Naive thymus-derived CD4-positive, alpha-beta T cell (primary cell): ENCODE measurements at regions of chr11 and their contacts with region 1.

Region 1: GRCh38 chr11:44727373-44728287 is 868 bp downstream of the TSPAN18 start:
- DNase-seq: peak; percentile 68 to 87 (median 80)
- ATAC-seq: peak; percentile 88
- H3K4me3 ChIP-seq: peak overlapping the region; percentile 72
- H3K4me3 Mint-ChIP-seq: peak overlapping the region; percentile 73 to 95 (median 90)
- H3K27ac ChIP-seq: peak overlapping the region; percentile 71
- H3K27ac Mint-ChIP-seq: peak overlapping the region; percentile 37 to 91 (median 76)
- H3K4me1 ChIP-seq: peaks cover 10 to 31% of the 10 kb centered on the region in 2 donors
- H3K4me1 Mint-ChIP-seq: peaks cover 35 to 61% (median 56%) of the 10 kb centered on the region in 7 donors
- H3K27me3 ChIP-seq: peaks cover 0 to 3% of the 10 kb centered on the region in 2 donors
- H3K27me3 Mint-ChIP-seq: peaks cover 0 to 38% (median 0%) of the 10 kb centered on the region in 5 donors

Region 2: GRCh38 chr11:44556735-44557409 is 170.8 kb before region 1 on chr11:
- CTCF ChIA-PET with region 1: interaction called, 4 read pairs
- POLR2A ChIA-PET with region 1: no interaction called
- intact Hi-C with region 1: loop called in 1 of 2 experiments (anchors 2 kb)
- DNase-seq: peak in 8 of 9 donors; percentile 30 to 69 (median 60)
- ATAC-seq: peak; percentile 84
- H3K4me3 ChIP-seq: no peak overlapping the region
- H3K4me3 Mint-ChIP-seq: peak overlapping the region in 2 of 10 donors; percentile 20 to 25
- H3K27ac ChIP-seq: no peak overlapping the region
- H3K27ac Mint-ChIP-seq: peak overlapping the region in 4 of 9 donors; percentile 8 to 65 (median 57)
- H3K4me1 ChIP-seq: peaks cover 9 to 13% of the 10 kb centered on the region in 2 donors
- H3K4me1 Mint-ChIP-seq: peaks cover 11 to 39% (median 29%) of the 10 kb centered on the region in 7 donors
- H3K27me3 ChIP-seq: no peaks in the 10 kb centered on the region
- H3K27me3 Mint-ChIP-seq: peaks cover 0 to 3% (median 0%) of the 10 kb centered on the region in 5 donors

Region 3: DNA sequence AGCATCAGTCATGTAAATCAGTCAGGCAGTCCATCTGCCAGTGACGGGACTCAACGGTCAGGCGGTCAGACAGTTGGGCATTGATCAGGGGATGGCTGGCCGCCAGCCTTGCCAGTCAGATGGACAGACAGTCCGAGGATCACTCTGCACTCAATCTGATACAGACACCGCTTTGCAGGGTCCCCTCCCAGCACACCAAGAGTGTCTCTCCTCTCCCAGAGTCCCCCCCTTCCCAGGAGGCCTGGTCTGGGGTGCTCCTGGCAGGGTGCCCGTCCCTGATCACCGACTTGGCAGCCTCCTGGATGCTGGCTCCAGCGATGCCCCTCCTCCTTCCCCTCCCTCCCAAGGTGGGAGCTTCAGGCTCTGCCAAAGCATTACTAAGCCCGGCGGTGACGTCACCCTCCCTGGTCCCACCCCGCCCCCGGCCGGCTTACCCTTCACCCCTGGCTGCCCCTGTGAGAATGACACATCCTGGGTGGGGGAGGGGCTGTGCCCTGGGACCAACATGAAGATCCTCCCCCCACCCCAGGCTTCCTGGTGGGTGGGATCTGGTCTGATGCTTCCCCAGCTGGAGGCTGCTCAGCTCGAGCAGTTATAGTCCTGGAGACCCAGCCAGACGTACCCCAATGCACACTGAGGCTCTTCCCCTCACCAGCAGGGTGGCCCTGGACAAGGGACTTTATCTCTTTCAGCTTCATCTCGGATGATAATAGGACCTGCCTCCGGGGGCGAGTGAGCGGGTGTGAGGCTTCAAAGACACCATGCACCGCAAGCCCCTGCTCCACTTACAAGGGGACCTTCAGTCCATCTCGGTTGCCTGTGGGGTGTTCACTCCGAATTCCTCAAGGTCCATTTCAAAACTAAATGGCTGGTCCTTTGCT is 93.0 kb before region 1 on chr11:
- CTCF ChIA-PET with region 1: interaction called, 4 read pairs
- POLR2A ChIA-PET with region 1: no interaction called
- intact Hi-C with region 1: loop called in 1 of 2 experiments (anchors 5 kb)
- DNase-seq: peak in 1 of 9 donors; percentile 17
- ATAC-seq: no peak
- H3K4me3 ChIP-seq: no peak overlapping the region
- H3K4me3 Mint-ChIP-seq: no peak overlapping the region
- H3K27ac ChIP-seq: no peak overlapping the region
- H3K27ac Mint-ChIP-seq: no peak overlapping the region
- H3K4me1 ChIP-seq: no peaks in the 10 kb centered on the region
- H3K4me1 Mint-ChIP-seq: peaks cover 2 to 23% (median 11%) of the 10 kb centered on the region in 7 donors
- H3K27me3 ChIP-seq: peaks cover 0 to 3% of the 10 kb centered on the region in 2 donors
- H3K27me3 Mint-ChIP-seq: peaks cover 0 to 27% (median 0%) of the 10 kb centered on the region in 5 donors

Region 4: DNA sequence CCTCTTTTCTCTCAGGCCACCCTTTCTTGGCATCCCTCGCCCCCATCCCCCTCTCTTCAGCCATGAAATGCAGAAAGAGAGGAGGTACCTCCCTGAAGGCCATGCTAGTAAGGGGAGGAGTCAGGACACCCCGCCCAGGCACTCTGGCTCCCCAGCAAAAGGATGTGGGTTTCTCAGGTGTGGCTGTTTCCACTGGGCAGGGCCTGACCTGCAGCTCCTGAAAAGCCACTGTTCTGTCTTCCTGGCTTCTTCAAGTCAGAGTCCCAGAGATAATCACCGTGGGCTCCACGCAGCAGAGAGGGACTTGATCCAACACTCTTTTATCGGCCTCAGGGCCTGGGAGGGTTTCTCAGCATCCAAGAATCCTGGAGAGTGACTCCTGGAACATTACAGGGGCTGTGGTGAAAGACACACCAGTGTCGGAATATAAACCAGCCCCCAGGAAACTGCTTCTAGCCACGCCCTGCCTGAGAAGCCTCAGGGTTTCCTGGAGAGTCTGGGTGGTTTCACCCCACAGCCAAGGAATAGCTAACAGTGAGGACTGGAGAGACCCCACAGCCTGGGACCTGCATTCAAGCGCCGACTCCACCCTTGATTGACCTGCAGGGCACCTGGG is 46.5 kb before region 1 on chr11:
- CTCF ChIA-PET with region 1: no interaction called
- POLR2A ChIA-PET with region 1: interaction called, 4 read pairs
- intact Hi-C with region 1: loop called (anchors 1 to 2 kb)
- DNase-seq: peak in 7 of 9 donors; percentile 33 to 73 (median 65)
- ATAC-seq: peak; percentile 73
- H3K4me3 ChIP-seq: peak overlapping the region; percentile 59
- H3K4me3 Mint-ChIP-seq: peak overlapping the region; percentile 51 to 93 (median 86)
- H3K27ac ChIP-seq: peak overlapping the region; percentile 59
- H3K27ac Mint-ChIP-seq: peak overlapping the region; percentile 38 to 94 (median 82)
- H3K4me1 ChIP-seq: peaks cover 26 to 45% of the 10 kb centered on the region in 2 donors
- H3K4me1 Mint-ChIP-seq: peaks cover 39 to 73% (median 58%) of the 10 kb centered on the region in 7 donors
- H3K27me3 ChIP-seq: no peaks in the 10 kb centered on the region
- H3K27me3 Mint-ChIP-seq: no peaks in the 10 kb centered on the region

Region 5: GRCh38 chr11:44775366-44775984 is 47.8 kb after region 1 on chr11:
- CTCF ChIA-PET with region 1: interaction called, 3 read pairs
- POLR2A ChIA-PET with region 1: interaction called, 5 read pairs
- intact Hi-C with region 1: loop called in 1 of 2 experiments (anchors 1 kb)
- DNase-seq: peak; percentile 34 to 68 (median 49)
- ATAC-seq: peak; percentile 78
- H3K4me3 ChIP-seq: no peak overlapping the region
- H3K4me3 Mint-ChIP-seq: peak overlapping the region in 1 of 10 donors; percentile 35
- H3K27ac ChIP-seq: no peak overlapping the region
- H3K27ac Mint-ChIP-seq: peak overlapping the region in 4 of 9 donors; percentile 13 to 72 (median 34)
- H3K4me1 ChIP-seq: peaks cover 0 to 8% of the 10 kb centered on the region in 2 donors
- H3K4me1 Mint-ChIP-seq: peaks cover 5 to 46% (median 32%) of the 10 kb centered on the region in 7 donors
- H3K27me3 ChIP-seq: no peaks in the 10 kb centered on the region
- H3K27me3 Mint-ChIP-seq: no peaks in the 10 kb centered on the region

Region 6: DNA sequence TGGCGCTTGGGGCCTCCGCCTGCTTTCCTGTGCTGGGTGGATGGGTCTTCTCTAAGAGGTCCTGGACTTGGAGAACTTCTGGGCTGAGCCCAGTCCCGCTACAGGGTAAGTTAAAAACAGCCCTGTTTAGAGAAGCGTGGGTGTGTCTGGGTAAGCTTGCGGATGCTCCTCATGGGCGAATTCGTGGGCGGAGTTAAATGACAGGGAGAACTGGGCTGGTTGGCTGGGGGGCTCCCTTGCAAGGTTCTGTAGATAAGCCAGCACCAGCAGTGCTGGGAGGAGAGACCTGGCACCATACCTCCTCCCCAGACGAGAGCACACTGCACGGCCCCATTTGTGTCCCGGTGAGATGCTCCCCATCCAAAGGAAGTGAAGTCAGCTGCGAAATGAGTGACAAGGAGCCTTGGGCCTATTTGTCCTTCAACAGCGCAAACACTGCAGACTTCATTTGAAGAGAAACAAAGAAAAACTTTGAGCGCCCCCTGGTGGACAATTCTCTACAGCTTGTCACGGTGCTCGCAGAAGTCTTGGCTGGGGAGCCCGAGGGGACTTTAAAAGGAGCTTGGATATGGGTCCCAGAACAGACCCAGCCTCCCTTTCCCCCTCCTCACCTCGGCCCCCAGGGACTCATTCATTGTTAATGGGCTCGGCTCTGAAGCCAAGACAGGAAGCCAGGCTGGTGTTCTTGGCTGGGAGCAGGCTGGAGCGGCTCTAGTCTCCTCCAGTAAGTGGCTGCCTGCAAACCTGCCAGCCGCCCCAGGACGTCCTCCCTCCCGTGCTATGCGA is 183.6 kb after region 1 on chr11:
- CTCF ChIA-PET with region 1: interaction called, 3 read pairs
- POLR2A ChIA-PET with region 1: no interaction called
- intact Hi-C with region 1: loop called (anchors 1 kb)
- DNase-seq: peak; percentile 57 to 84 (median 78)
- ATAC-seq: peak; percentile 78
- H3K4me3 ChIP-seq: no peak overlapping the region
- H3K4me3 Mint-ChIP-seq: no peak overlapping the region
- H3K27ac ChIP-seq: no peak overlapping the region
- H3K27ac Mint-ChIP-seq: peak overlapping the region in 4 of 9 donors; percentile 14 to 55 (median 30)
- H3K4me1 ChIP-seq: no peaks in the 10 kb centered on the region
- H3K4me1 Mint-ChIP-seq: peaks cover 4 to 9% (median 7%) of the 10 kb centered on the region in 7 donors
- H3K27me3 ChIP-seq: no peaks in the 10 kb centered on the region
- H3K27me3 Mint-ChIP-seq: no peaks in the 10 kb centered on the region